ENCODE measurements at regions of chr6 and their contacts with region 1.

Region 1: GRCh38 chr6:166956444-166957086 is at the start of gene RNASET2:
- DNase-seq: peak; percentile 94 to 100 (median 98)
- ATAC-seq: peak; percentile 83 to 85
- H3K4me3 Mint-ChIP-seq: peak within 1 kb of the TSS; percentile 84 to 98 (median 95)
- H3K27ac Mint-ChIP-seq: peak within 1 kb of the TSS; percentile 94 to 99 (median 98)
- H3K4me1 Mint-ChIP-seq: peaks cover 44 to 76% (median 73%) of the 10 kb centered on the region in 4 donors
- H3K27me3 Mint-ChIP-seq: no peaks in the 10 kb centered on the region
- polyA plus RNA-seq, gene RNASET2: 141 to 283 (median 248) TPM

Region 2: DNA sequence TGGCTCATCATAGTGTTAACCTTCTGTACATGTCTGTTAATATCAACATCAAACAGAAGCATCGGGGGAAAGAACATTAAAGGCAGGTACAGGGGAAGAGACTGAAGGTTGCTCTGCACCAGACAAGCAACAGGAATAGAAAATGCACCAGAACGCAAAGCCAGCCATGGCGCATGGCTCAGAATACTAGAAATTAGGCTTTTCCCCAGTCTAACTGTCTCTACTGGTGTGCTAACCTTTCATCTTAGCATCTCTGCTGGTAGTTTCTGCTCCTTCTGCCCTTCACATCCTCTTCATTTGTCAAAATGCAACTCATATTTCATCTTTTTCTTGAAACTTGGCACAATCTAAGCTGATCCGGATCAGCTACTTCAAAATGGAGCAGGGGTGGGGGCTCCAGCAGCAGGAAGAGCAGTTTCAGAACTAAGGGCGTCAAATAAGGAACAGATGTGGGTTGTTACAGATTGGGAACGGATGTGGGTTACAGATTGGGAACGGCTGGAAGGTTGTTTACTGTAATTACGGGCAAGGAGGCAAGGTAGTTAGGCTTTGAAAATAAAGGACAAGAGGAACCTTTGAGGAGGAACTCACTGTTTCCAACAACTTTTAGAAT is 12.9 kb after region 1 on chr6:
- POLR2A ChIA-PET with region 1: interaction called, 23 read pairs
- DNase-seq: peak in 2 of 10 donors; percentile 14 to 44
- ATAC-seq: peak; percentile 25 to 63
- H3K4me3 Mint-ChIP-seq: peak overlapping the region in 9 of 10 donors; percentile 31 to 82 (median 72)
- H3K27ac Mint-ChIP-seq: peak overlapping the region in 9 of 10 donors; percentile 4 to 96 (median 86)
- H3K4me1 Mint-ChIP-seq: peaks cover 7 to 24% (median 15%) of the 10 kb centered on the region in 4 donors
- H3K27me3 Mint-ChIP-seq: no peaks in the 10 kb centered on the region

Region 3: DNA sequence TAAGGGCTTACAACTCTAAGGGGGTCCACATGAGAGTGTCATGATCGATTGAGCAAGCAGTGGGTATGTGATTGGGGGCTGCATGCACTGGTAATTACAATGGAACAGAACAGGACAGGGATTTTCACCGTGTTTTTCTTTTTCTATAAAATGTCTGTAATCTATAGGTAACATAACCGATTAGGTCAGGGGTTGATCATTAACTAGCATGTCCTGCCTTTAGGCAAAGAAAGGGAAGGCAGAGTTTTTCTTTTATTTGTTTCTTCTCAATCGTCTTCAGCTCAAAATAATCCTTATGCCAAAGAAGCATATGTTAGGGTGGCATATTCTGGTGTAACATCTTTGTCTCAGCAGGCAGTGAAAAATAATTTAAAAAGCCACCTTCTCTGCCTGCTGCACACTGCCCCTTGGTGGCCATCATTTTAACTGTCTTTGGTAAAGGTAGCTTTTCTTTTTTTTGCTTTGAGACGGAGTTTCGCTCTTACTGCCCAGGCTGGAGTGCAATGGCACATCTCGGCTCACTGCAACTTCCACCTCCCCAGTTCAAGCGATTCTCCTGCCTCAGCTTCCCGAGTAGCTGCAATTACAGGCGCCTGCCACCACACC is 33.0 kb after region 1 on chr6:
- POLR2A ChIA-PET with region 1: interaction called, 26 read pairs
- DNase-seq: peak in 8 of 10 donors; percentile 10 to 75 (median 33)
- ATAC-seq: peak; percentile 76 to 78
- H3K4me3 Mint-ChIP-seq: no peak overlapping the region
- H3K27ac Mint-ChIP-seq: peak overlapping the region in 2 of 10 donors; percentile 16 to 80
- H3K4me1 Mint-ChIP-seq: peaks cover 0 to 11% (median 3%) of the 10 kb centered on the region in 4 donors
- H3K27me3 Mint-ChIP-seq: no peaks in the 10 kb centered on the region

Region 4: DNA sequence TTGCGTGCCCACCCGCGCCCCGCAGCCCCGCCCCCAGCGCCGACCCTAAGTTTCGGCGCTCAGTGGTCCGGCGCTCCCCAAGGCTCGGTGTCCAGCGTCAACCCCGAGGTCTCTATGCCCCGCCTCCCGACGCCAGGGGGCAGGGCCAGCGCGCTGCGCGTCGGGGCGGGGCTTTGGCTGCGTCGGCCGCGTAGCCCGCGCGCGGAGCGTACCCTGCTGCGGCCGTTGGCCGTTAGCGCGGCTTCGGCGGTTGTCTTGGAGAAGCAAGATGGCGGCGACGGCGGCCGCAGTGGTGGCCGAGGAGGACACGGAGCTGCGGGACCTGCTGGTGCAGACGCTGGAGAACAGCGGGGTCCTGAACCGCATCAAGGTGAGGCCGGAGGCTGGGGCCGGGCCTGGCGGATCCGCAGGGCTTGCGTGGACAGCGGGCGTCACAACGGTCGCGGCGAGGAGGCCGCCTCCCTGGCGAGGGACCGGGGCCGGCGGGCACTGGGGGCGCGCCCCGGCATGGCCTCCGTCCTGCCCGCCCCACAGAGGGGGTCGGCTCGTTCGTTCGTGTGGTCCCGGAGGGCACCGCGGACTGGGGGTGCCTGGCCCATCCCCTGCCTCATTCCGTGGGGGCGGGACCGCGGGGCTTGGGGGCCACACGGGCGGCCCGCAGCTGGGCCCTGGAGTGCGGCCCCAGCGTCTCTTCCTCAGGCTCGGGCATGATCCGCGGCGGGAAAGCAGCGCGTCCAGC is 42.7 kb after region 1 on chr6 and contains the start of gene CEP43:
- POLR2A ChIA-PET with region 1: interaction called, 66 read pairs
- DNase-seq: peak; percentile 77 to 93 (median 88)
- ATAC-seq: peak; percentile 89 to 91
- H3K4me3 Mint-ChIP-seq: peak within 1 kb of the TSS; percentile 79 to 94 (median 91)
- H3K27ac Mint-ChIP-seq: peak within 1 kb of the TSS; percentile 57 to 95 (median 84)
- H3K4me1 Mint-ChIP-seq: peaks cover 17 to 33% (median 29%) of the 10 kb centered on the region in 4 donors
- H3K27me3 Mint-ChIP-seq: no peaks in the 10 kb centered on the region
- polyA plus RNA-seq, gene CEP43: 2.5 to 4.5 (median 4.3) TPM